Right ventricle myocardium superior (tissue), 1 donor: ENCODE measurements at regions of chr2 and their contacts with region 1.

Region 1: DNA sequence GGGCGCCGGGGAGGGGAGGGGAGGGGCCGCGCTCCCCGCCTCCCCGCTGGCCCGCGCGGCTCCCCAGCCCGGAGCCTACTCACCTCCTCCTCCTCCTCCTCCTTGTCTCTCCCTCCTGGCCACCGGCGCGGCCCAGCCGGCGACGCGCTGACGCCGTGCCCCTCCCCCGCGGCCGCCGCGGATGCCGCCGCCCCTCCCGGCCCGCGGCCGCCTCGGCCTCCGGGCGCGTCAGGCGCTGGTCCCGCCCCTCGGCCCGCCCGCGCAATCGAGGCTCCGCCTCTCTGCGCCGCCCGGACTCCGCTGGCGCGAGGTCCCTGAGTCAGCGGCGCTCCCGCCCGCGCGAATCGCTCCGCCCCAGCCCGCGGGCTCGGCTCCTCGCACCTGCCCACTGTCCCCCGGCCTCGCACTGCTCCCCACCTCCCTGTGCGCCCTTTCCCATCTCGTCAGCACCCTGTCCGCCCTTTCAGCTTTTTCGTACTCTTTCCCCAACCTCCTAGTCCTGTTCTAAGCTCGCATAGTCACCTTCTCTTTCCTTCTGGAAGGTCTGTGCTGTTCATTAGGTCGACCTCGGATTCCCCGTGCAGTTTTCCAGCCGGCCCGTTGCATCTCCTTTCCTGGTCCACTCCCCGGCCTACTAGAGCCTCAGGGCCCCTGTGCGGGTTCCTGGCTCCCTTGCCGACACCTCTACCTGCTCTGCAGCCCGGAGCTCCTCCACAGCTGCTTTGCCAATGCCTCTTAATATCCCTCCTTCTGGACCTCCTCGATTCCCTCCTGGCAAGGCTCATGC is 187.4 kb downstream of the ZEB2 start:
- DNase-seq: peak; percentile 89
- ATAC-seq: peak; percentile 96

Region 2: GRCh38 chr2:144516981-144517865 is 184.7 kb after region 1 on chr2:
- intact Hi-C with region 1: loop called (anchors 10 kb)
- DNase-seq: peak; percentile 77
- ATAC-seq: peak; percentile 32